CD8-positive, alpha-beta T cell (primary cell): ENCODE measurements at regions of chr11 and their contacts with region 1.

Region 1: DNA sequence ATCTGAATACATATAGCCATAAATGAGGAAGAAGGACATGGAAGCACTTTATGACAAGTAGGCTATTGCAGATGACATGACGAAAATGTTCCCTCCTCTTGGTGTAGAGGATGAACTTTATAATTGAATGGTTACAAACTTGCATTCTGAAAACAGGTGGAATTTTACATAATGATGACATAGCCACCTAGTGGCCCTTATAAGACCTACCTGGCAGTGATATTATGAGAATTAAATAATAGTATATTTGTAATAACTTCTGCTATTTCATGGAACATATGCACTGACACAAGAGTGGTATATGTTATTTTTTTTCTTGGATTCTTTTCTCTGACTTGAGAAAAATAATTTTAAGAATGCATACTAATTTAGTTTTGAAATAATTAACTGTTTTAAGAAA is 22.9 kb downstream of the TRIM22 start:
- DNase-seq: peak in 2 of 9 experiments; percentile 28 to 49
- ATAC-seq: no peak
- H3K4me3 ChIP-seq: no peak overlapping the region
- H3K4me3 Mint-ChIP-seq: no peak overlapping the region
- H3K27ac ChIP-seq: no peak overlapping the region
- H3K27ac Mint-ChIP-seq: peak overlapping the region; percentile 43
- H3K4me1 ChIP-seq: no peaks in the 10 kb centered on the region
- H3K4me1 Mint-ChIP-seq: no peaks in the 10 kb centered on the region
- H3K27me3 ChIP-seq: no peaks in the 10 kb centered on the region
- H3K27me3 Mint-ChIP-seq: no peaks in the 10 kb centered on the region
- CTCF ChIP-seq: peak; percentile 65

Region 2: DNA sequence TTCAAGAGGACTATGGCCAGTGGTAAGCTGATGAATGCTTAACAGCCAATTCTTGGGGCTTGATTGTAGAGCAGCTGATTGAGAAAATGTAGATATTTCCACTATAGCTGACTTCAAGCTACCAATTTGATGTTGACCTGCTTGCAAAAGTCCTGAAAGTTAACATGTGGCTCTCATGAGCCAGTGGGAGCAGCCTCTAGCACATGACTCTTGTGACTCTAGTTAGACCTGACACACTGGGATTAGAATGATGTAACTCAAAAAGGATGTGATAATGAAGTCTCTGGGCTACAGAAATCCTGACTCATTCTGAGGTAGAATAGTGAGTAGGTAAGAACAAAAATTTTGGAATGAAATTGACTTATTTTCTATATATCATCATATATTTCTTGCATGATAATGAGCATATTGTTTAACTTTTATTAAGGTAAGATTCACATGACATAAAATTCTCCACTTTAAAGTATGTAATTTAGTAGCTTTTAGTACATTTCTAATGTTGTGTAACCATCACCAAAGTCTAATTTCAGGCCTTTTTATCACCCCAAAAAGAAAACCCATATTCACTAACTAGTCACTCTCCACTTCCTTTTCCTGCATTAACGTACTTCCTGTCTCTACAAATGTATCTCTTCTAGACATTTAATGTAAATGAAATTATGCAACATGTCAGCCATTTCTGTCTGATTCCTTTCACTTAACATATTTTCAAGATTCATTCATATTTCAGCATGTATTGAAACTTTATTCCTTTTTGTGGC is 148.1 kb before region 1 on chr11:
- CTCF ChIA-PET with region 1: no interaction called
- POLR2A ChIA-PET with region 1: no interaction called
- intact Hi-C with region 1: no loop called
- DNase-seq: no peak
- ATAC-seq: no peak
- H3K4me3 ChIP-seq: no peak overlapping the region
- H3K4me3 Mint-ChIP-seq: no peak overlapping the region
- H3K27ac ChIP-seq: no peak overlapping the region
- H3K27ac Mint-ChIP-seq: no peak overlapping the region
- H3K4me1 ChIP-seq: no peaks in the 10 kb centered on the region
- H3K4me1 Mint-ChIP-seq: peaks cover 6% of the 10 kb centered on the region
- H3K27me3 ChIP-seq: no peaks in the 10 kb centered on the region
- H3K27me3 Mint-ChIP-seq: peaks cover 8% of the 10 kb centered on the region
- CTCF ChIP-seq: no peak

Region 3: GRCh38 chr11:5600374-5600851 is 112.1 kb before region 1 on chr11:
- CTCF ChIA-PET with region 1: interaction called, 14 read pairs
- POLR2A ChIA-PET with region 1: no interaction called
- intact Hi-C with region 1: loop called (anchors 1 to 2 kb)
- DNase-seq: peak; percentile 10 to 77 (median 58)
- ATAC-seq: peak; percentile 89
- H3K4me3 ChIP-seq: no peak overlapping the region
- H3K4me3 Mint-ChIP-seq: no peak overlapping the region
- H3K27ac ChIP-seq: no peak overlapping the region
- H3K27ac Mint-ChIP-seq: no peak overlapping the region
- H3K4me1 ChIP-seq: no peaks in the 10 kb centered on the region
- H3K4me1 Mint-ChIP-seq: peaks cover 4% of the 10 kb centered on the region
- H3K27me3 ChIP-seq: no peaks in the 10 kb centered on the region
- H3K27me3 Mint-ChIP-seq: peaks cover 4% of the 10 kb centered on the region
- CTCF ChIP-seq: peak; percentile 68

Region 4: DNA sequence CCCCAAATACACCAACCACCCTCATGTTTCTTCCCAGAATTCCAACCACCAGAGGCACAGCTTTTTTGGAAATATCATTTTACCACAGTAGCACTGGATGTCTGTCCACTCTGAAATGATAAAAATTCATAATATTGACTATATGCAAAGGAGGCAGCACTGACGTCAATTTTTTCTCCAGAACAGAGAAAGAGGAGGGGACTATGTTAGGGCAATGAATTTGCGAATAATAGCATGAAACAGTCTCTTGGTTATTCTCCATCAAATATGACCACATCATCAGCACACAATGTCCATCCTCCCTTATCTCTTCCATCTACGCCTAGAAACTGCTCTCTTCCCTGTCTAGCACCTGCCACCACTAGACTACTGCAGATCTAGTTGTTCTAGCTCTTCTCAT is 66.4 kb before region 1 on chr11:
- CTCF ChIA-PET with region 1: no interaction called
- POLR2A ChIA-PET with region 1: no interaction called
- intact Hi-C with region 1: no loop called
- DNase-seq: no peak
- ATAC-seq: no peak
- H3K4me3 ChIP-seq: no peak overlapping the region
- H3K4me3 Mint-ChIP-seq: no peak overlapping the region
- H3K27ac ChIP-seq: no peak overlapping the region
- H3K27ac Mint-ChIP-seq: no peak overlapping the region
- H3K4me1 ChIP-seq: no peaks in the 10 kb centered on the region
- H3K4me1 Mint-ChIP-seq: no peaks in the 10 kb centered on the region
- H3K27me3 ChIP-seq: no peaks in the 10 kb centered on the region
- H3K27me3 Mint-ChIP-seq: no peaks in the 10 kb centered on the region
- CTCF ChIP-seq: no peak

Region 5: GRCh38 chr11:5737091-5737490 is 24.6 kb after region 1 on chr11:
- CTCF ChIA-PET with region 1: no interaction called
- POLR2A ChIA-PET with region 1: no interaction called
- intact Hi-C with region 1: no loop called
- DNase-seq: no peak
- ATAC-seq: no peak
- H3K4me3 ChIP-seq: no peak overlapping the region
- H3K4me3 Mint-ChIP-seq: no peak overlapping the region
- H3K27ac ChIP-seq: no peak overlapping the region
- H3K27ac Mint-ChIP-seq: no peak overlapping the region
- H3K4me1 ChIP-seq: no peaks in the 10 kb centered on the region
- H3K4me1 Mint-ChIP-seq: no peaks in the 10 kb centered on the region
- H3K27me3 ChIP-seq: peaks cover 0 to 3% of the 10 kb centered on the region in 2 experiments
- H3K27me3 Mint-ChIP-seq: peaks cover 5% of the 10 kb centered on the region
- CTCF ChIP-seq: no peak